SK-N-SH (cell line): ENCODE measurements at regions of chr2 and their contacts with region 1.

Region 1: DNA sequence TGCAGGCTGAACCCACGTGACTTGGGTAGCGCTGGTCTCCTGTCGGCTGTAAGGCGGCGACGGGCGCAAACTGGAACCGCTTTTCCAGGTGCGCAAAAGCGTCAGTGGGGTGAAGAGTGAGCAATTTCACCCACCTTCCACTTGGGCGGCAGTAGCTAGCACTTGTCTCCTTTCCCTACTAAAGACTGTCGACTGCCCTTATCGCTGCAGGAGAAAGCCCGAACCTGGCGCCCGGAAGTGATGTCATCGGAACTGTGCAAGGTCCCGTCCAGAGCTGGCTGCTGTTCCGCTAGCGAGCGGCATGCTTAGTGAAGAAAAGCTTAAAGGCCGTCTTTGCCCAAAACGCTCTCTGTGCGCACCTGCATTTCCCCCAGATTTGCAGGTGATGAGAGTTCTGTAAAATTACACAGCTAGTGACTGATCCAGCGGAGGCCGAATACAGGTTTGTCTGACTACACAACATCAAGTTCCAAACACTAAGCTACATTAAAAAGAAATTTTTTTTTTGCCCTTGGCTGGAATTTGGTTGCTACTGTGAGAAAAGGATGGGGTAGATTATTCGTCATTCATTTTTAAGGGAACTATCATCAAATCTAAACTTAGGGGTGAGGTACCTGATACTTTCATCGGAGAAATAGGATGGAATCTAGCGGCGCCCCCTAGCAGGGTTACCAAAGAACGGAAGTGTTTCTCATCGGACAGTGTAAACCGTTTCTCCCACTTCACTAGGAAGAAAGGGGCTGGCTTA is at the start of gene OSGEPL1:
- DNase-seq: peak; percentile 81
- H3K4me3 ChIP-seq: peak within 1 kb of the TSS; percentile 83 to 90
- H3K27ac ChIP-seq: peak within 1 kb of the TSS; percentile 86 to 97
- H3K4me1 ChIP-seq: peaks cover 8 to 13% of the 10 kb centered on the region in 2 experiments; a peak in 2 of 4 replicates
- H3K27me3 ChIP-seq: no peaks in the 10 kb centered on the region
- CTCF ChIP-seq: peak; percentile 80
- EP300 ChIP-seq: 0 out of 4 replicates have a peak, but pooled peaks of 1 of the 2 experiments have one; percentile 28
- RAD21 ChIP-seq: no peak
- polyA plus RNA-seq, gene OSGEPL1: 5.8 and 8.3 TPM in 2 replicates

Region 2: GRCh38 chr2:189569295-189569910 is 193.3 kb before region 1 on chr2:
- CTCF ChIA-PET with region 1: no interaction called
- POLR2A ChIA-PET with region 1: no interaction called
- DNase-seq: no peak
- H3K4me3 ChIP-seq: no peak overlapping the region
- H3K27ac ChIP-seq: peak overlapping the region; percentile 28 to 52; a peak in 3 of 4 replicates
- H3K4me1 ChIP-seq: peaks cover 0 to 9% of the 10 kb centered on the region in 2 experiments; a peak in 2 of 4 replicates
- H3K27me3 ChIP-seq: no peaks in the 10 kb centered on the region
- CTCF ChIP-seq: 0 out of 2 replicates have a peak, but pooled peaks have one; percentile 22
- EP300 ChIP-seq: no peak
- RAD21 ChIP-seq: no peak

Region 3: GRCh38 chr2:189674374-189675112 is 88.2 kb before region 1 on chr2 and contains the start of gene ANKAR:
- CTCF ChIA-PET with region 1: interaction called, 14 read pairs
- POLR2A ChIA-PET with region 1: interaction called, 5 read pairs
- DNase-seq: peak; percentile 93
- H3K4me3 ChIP-seq: peak within 1 kb of the TSS; percentile 69 to 76
- H3K27ac ChIP-seq: peak within 1 kb of the TSS; percentile 84 to 90
- H3K4me1 ChIP-seq: peaks cover 0 to 6% of the 10 kb centered on the region in 2 experiments; a peak in 2 of 4 replicates
- H3K27me3 ChIP-seq: no peaks in the 10 kb centered on the region
- CTCF ChIP-seq: peak; percentile 84
- EP300 ChIP-seq: no peak
- RAD21 ChIP-seq: peak; percentile 49
- polyA plus RNA-seq, gene ANKAR: 1.6 and 2.1 TPM in 2 replicates

Region 4: DNA sequence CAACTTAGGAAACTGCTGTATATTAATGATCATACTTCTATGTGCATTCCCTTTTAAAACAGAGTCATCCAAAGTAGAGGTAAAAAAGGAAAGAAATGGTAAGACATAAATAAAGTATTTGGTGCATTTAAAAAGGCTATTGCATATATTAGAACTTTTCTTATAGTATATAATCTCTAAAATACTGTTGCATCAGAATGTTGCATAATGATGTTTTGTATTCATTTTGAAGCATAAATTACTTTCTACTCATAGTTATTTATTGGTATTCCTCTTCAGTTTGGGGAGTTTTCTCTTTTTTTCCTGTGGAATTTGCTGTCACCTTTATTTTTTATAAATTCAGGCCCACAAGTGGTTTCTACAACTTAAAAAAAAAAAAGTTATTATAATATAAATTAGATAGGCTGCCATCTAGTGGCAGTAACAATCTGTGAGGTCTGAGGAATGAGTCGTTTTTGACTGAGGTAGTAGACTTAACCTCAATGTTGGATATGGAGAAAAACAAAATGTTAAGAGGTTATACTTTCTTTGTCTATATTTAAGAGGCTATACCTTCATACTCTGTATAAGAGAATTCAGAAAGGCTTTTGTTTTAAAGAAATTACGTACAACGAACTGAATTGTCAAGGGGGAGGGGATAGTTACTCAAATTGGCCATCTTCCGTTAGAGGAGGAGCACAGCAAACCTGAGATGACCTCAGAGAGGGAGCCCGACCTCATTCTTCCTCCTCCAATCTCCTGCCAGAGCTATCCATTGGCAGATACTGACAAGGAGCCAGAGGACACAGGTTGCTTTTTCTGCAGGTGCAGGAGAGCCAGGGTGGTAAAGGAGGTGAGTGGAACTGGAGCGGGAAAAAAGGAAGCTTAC is 64.5 kb before region 1 on chr2:
- CTCF ChIA-PET with region 1: interaction called, 11 read pairs
- POLR2A ChIA-PET with region 1: no interaction called
- DNase-seq: peak; percentile 26
- H3K4me3 ChIP-seq: no peak overlapping the region
- H3K27ac ChIP-seq: no peak overlapping the region
- H3K4me1 ChIP-seq: no peaks in the 10 kb centered on the region
- H3K27me3 ChIP-seq: no peaks in the 10 kb centered on the region
- CTCF ChIP-seq: peak; percentile 72
- EP300 ChIP-seq: no peak
- RAD21 ChIP-seq: peak; percentile 48

Region 5: DNA sequence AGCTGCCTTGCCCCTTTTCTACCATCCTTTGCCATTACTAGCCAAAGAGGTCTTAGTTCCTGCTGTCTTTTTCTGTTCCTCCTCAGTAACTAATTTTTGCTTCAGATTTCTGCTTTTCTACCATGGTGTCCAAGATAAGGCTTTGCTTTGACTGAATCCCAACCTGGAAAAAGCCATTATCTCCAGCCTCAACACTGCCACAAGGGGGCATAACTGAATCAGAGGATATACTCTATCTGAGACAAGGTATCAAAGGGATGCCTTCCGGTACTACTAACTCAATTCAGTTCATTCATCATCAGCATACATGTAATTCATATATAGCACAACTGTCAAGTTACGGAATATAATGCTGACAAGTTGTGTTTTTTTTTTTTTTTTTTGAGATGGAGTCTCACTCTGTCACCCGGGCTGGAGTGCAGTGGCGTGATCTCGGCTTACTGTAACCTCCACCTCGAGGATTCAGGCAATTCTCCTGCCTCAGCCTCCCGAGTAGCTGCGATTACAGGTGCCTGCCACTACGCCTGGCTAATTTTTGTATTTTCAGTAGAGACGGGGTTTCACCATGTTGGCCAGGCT is 11.6 kb before region 1 on chr2:
- CTCF ChIA-PET with region 1: interaction called, 36 read pairs
- POLR2A ChIA-PET with region 1: interaction called, 5 read pairs
- DNase-seq: peak; percentile 49
- H3K4me3 ChIP-seq: no peak overlapping the region; a peak in 1 of 4 replicates
- H3K27ac ChIP-seq: no peak overlapping the region
- H3K4me1 ChIP-seq: no peaks in the 10 kb centered on the region
- H3K27me3 ChIP-seq: no peaks in the 10 kb centered on the region
- CTCF ChIP-seq: peak; percentile 75
- EP300 ChIP-seq: no peak
- RAD21 ChIP-seq: peak; percentile 55

Region 6: DNA sequence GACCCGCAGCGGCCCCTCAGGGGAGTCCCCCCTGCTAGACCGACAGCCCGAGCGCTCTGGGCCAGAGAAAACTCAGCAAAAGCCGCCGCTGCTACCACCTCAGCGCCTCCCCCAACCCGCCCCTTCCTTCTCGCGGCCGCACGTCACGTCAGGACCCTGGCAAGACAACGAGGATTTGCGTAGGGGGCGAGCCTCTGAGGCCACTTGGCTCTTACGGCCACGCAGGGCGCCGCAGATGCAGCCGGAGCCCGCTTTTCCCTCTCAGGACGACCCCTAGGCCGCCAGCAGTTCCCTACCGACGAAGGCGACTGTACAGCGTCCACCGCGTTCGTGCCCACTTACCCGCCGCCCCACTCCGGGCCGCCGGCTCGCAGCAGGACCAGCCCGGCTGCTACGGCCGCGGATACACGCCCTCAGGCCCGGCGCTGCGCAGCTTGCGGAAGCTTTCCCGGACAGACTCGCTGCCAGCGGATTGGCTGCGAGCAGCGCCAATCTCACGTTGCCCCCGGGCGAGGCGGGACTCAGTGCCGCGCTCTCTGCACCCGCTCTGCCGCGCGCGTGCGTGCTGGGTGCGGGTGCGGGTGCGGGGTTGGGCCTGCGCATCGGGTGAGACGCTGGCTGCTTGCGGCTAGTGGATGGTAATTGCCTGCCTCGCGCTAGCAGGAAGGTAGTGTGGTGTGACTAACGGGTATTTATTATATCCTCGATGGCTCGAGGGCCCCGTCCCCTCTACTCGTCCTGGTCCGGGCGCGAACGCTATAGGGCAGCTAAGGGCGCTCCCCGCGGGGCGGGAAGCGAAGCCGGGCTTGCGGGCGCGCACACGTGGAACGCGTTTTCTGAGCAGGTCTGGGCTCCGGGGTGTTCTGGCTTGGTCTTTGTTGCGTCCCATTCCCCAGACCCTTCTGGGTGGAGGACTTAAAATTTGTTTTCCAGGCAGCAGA is 21.5 kb after region 1 on chr2 and contains the starts of genes ORMDL1 and PMS1:
- CTCF ChIA-PET with region 1: interaction called, 24 read pairs
- POLR2A ChIA-PET with region 1: interaction called, 31 read pairs
- DNase-seq: peak; percentile 96
- H3K4me3 ChIP-seq: peak within 1 kb of the TSS; percentile 80 to 94
- H3K27ac ChIP-seq: peak within 1 kb of the TSS; percentile 93 to 94
- H3K4me1 ChIP-seq: peaks cover 3 to 8% of the 10 kb centered on the region in 2 experiments
- H3K27me3 ChIP-seq: no peaks in the 10 kb centered on the region
- CTCF ChIP-seq: no peak
- EP300 ChIP-seq: no peak; a peak in 1 of 4 replicates
- RAD21 ChIP-seq: no peak
- polyA plus RNA-seq, gene ORMDL1: 99.2 and 196 TPM in 2 replicates
- polyA plus RNA-seq, gene PMS1: 7.7 and 9.6 TPM in 2 replicates